ENCODE measurements at regions of chr20 and their contacts with region 1.

Region 1: DNA sequence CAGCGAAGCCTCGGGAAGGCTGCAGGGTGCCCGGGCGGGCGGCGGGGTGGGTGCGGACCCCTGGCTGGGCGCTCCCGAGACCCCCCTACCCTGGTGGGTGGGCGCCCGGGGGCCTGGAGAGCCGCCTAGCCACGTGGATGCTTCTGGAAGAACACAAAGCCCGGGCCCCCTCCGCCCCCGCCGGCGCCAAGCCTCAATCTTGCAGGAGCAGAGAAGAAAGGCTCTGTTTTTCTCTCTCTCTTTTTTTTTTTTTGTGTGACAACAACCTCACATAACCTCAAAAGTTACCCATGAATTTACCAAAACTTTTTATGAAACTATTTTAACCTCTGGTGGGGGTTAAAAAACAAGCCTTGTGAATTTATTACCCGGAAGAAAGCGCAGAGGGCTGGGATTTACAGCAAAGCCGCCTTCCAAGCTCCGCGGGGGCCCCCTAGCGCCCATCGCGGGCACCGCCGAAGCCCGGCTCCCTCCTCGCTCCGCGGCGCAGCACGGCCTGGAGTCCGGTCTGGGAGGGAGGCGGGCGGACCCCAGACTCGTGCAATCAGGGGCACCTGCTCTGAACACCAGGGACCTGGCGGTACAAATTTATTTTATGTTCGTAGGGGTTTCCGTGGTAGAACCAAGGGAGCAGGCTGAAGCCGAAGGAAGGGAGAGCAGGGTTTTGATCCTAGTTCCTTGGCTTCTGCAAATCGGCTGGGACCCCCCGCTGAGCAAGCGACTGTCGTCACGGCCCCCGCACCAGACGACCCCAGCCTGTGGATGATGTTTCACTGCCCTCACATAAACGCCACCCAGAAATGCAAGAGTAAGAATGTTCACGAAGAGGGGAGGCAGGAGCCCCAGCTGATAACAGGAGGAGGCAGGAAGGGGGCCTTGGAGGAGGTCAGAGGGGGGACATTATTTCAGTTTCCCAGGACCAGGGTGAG is 58.9 kb downstream of the ZNF831 start:
- DNase-seq: peak; percentile 72
- H3K4me3 Mint-ChIP-seq: peak overlapping the region; percentile 82
- H3K27ac Mint-ChIP-seq: peak overlapping the region; percentile 72
- H3K4me1 Mint-ChIP-seq: peaks cover 7% of the 10 kb centered on the region
- H3K27me3 Mint-ChIP-seq: peaks cover 2% of the 10 kb centered on the region

Region 2: DNA sequence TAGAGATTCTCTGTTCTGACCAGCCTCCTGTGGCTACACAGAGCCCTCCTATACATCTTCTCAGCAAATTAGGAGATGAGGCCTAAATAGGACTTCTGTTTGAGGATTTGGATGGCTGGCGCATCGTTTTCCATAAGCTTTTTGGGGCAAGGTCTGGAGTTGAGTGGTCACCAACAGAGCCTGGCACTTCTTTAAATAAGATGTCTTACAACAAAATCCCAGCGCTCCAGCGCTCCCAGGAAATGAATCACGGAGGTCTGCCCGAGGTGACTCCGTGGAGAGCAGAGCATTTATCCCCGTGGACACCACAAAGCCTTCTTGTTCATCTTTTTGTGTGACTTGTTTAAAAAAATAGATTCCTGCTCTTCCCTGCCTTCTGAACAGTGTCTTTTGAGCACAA is 447.1 kb before region 1 on chr20:
- intact Hi-C with region 1: no loop called
- DNase-seq: no peak
- H3K4me3 Mint-ChIP-seq: no peak overlapping the region
- H3K27ac Mint-ChIP-seq: no peak overlapping the region
- H3K4me1 Mint-ChIP-seq: no peaks in the 10 kb centered on the region
- H3K27me3 Mint-ChIP-seq: peaks cover 34% of the 10 kb centered on the region

Region 3: GRCh38 chr20:58870239-58871014 is 352.1 kb before region 1 on chr20:
- intact Hi-C with region 1: loop called (anchors 1 kb)
- DNase-seq: peak; percentile 17
- H3K4me3 Mint-ChIP-seq: no peak overlapping the region
- H3K27ac Mint-ChIP-seq: no peak overlapping the region
- H3K4me1 Mint-ChIP-seq: peaks cover 4% of the 10 kb centered on the region
- H3K27me3 Mint-ChIP-seq: peaks cover 32% of the 10 kb centered on the region

Region 4: GRCh38 chr20:59006864-59007664 is 215.5 kb before region 1 on chr20 and contains the start of gene CTSZ:
- intact Hi-C with region 1: loop called (anchors 1 kb)
- DNase-seq: peak; percentile 33
- H3K4me3 Mint-ChIP-seq: peak within 1 kb of the TSS; percentile 85
- H3K27ac Mint-ChIP-seq: peak within 1 kb of the TSS; percentile 83
- H3K4me1 Mint-ChIP-seq: peaks cover 47% of the 10 kb centered on the region
- H3K27me3 Mint-ChIP-seq: no peaks in the 10 kb centered on the region
- total RNA-seq, gene CTSZ: 46.4 and 54.1 TPM in 2 replicates

Region 5: GRCh38 chr20:59032023-59032712 is 190.3 kb before region 1 on chr20 and contains the start of gene ATP5F1E:
- intact Hi-C with region 1: loop called (anchors 1 kb)
- DNase-seq: peak; percentile 96
- H3K4me3 Mint-ChIP-seq: peak within 1 kb of the TSS; percentile 90
- H3K27ac Mint-ChIP-seq: peak within 1 kb of the TSS; percentile 94
- H3K4me1 Mint-ChIP-seq: peaks cover 60% of the 10 kb centered on the region
- H3K27me3 Mint-ChIP-seq: no peaks in the 10 kb centered on the region
- total RNA-seq, gene ATP5F1E: 81.3 and 84.6 TPM in 2 replicates

Region 6: GRCh38 chr20:59042796-59043660 is 179.5 kb before region 1 on chr20:
- intact Hi-C with region 1: loop called (anchors 1 kb)
- DNase-seq: peak; percentile 94
- H3K4me3 Mint-ChIP-seq: peak overlapping the region; percentile 93
- H3K27ac Mint-ChIP-seq: peak overlapping the region; percentile 94
- H3K4me1 Mint-ChIP-seq: peaks cover 44% of the 10 kb centered on the region
- H3K27me3 Mint-ChIP-seq: no peaks in the 10 kb centered on the region

Region 7: DNA sequence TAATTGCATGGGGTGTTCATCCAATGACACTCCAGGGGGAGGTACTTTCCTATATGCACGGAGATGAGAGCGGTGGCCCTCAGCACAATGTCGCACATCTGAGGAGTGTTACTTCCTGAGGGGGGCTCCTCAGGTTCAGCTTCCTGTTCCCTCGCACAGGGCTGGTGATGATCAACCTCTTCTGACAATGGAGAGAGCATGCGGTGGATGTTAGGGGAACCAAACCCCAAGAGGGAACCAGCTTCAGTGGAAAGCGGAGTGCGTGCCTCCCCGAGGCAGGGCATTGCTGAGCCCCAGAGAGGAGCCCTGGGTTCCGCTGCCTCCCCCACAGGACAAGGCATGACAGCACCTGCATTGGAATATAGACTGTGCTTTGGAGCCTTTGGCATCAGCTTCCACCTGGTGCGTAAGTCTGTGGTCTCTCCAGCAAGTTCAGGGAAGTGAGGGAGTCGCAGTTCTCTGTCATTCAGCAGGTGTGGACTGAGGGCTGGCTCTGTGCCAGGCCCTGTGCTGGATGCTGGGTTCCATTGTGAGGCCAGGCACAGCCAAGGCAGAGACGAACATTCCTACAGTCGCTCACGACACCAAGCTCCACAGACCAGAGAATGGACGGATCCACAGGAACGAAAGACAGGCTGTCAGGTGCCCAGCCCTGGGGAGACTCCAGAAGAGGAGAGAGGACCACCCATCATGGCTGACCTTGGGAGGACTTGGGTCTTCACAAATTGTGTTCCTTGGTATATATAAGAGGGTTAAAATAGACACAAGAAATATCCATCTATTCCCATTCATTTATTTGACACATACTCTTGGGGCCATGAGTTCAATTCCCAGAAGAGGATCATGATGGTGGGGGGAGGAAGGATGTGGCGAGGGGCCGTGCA is 62.8 kb before region 1 on chr20:
- intact Hi-C with region 1: loop called (anchors 5 kb)
- DNase-seq: peak; percentile 52
- H3K4me3 Mint-ChIP-seq: peak overlapping the region; percentile 78
- H3K27ac Mint-ChIP-seq: peak overlapping the region; percentile 92
- H3K4me1 Mint-ChIP-seq: peaks cover 80% of the 10 kb centered on the region
- H3K27me3 Mint-ChIP-seq: no peaks in the 10 kb centered on the region

Region 8: GRCh38 chr20:59403261-59403961 is 180.9 kb after region 1 on chr20:
- intact Hi-C with region 1: loop called (anchors 5 kb)
- DNase-seq: peak; percentile 54
- H3K4me3 Mint-ChIP-seq: peak overlapping the region; percentile 45
- H3K27ac Mint-ChIP-seq: no peak overlapping the region
- H3K4me1 Mint-ChIP-seq: no peaks in the 10 kb centered on the region
- H3K27me3 Mint-ChIP-seq: peaks cover 5% of the 10 kb centered on the region

Region 9: DNA sequence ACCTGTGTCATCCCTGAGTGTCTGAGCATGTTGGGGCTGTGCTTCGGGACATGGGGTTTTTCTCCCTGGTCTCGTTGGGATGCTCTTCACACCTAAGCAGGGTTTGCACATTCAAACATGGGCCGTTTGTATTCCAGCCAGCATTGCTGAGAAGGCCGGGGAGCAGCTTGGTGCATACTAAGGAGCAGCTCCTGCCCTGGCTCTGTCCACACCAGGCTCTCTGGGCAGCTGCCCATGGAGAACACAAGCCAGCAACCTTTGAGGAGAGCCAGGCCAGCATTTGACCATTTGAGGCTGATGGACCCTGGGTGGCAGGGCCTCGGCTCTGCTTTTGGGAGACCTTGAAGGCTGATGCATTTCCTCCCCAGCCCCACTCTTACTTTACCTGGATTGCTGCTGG is 474.0 kb after region 1 on chr20:
- intact Hi-C with region 1: no loop called
- DNase-seq: no peak
- H3K4me3 Mint-ChIP-seq: no peak overlapping the region
- H3K27ac Mint-ChIP-seq: no peak overlapping the region
- H3K4me1 Mint-ChIP-seq: no peaks in the 10 kb centered on the region
- H3K27me3 Mint-ChIP-seq: peaks cover 3% of the 10 kb centered on the region